Panc1 (cell line): ENCODE measurements at regions of chr14 and their contacts with region 1.

Region 1: GRCh38 chr14:61997161-61997560 is 234.9 kb downstream of the SNAPC1 start:
- DNase-seq: no peak
- ATAC-seq: no peak
- H3K4me3 ChIP-seq: no peak overlapping the region
- H3K27ac ChIP-seq: no peak overlapping the region
- H3K4me1 ChIP-seq: no peaks in the 10 kb centered on the region
- H3K27me3 ChIP-seq: no peaks in the 10 kb centered on the region
- CTCF ChIP-seq: no peak

Region 2: DNA sequence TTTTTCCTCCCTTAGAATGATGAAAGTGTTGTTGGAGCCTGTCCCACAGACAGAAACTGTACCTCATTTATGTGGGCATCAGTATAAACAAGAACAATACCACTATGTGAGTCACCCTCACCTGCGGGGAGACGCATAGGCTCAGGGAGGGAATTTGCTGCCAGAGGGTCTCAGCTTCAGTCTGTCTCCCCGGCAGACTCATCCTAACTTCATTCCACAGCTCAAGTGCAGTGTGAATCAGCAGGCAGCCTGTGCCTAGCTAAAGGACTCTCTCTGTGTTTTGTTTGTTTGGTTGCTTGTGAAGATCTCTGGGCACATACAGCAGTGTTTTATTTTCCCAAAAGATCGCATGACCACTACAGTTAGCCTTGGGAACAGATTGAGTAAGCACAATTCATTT is 576.8 kb before region 1 on chr14:
- CTCF ChIA-PET with region 1: no interaction called
- POLR2A ChIA-PET with region 1: no interaction called
- in situ Hi-C with region 1: no loop called
- intact Hi-C with region 1: no loop called
- DNase-seq: no peak
- ATAC-seq: no peak
- H3K4me3 ChIP-seq: no peak overlapping the region
- H3K27ac ChIP-seq: no peak overlapping the region
- H3K4me1 ChIP-seq: no peaks in the 10 kb centered on the region
- H3K27me3 ChIP-seq: no peaks in the 10 kb centered on the region
- CTCF ChIP-seq: no peak

Region 3: DNA sequence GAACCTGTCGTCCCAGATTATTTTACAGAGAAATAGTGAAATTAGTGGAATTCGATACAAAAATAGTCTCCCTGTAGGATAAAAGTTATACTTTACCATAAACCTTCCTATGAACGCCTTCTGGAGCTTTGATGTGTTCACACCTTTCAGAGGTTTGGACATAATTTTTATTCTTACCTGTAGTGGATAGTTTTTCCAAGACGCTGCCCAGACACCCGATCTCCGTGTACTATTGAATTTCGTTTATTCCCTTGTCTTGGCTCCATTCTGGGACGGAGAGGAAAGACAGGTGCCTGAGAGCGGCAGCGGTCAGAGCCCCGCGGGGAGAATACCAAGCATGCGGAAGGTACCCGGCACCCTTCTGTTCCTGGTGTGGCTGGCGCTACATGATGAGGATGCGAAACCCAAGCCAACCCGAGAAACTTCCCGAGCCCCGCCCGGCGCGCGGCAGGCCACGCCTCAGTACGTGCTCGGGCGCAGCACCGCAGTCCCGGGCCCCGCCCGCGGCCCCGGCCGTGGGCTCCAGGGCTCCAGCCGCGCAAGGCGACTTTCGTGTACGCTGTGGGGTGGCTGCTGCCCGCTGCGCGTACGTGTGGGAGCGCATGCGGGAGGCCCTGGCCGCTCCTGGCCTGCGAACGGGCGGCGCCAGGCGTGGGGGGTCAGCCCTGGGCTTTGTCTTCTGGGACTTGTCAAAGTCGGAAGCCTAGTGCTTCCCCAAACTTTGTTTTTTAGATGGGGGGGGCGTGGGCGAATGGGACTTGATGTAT is 246.3 kb before region 1 on chr14:
- CTCF ChIA-PET with region 1: no interaction called
- POLR2A ChIA-PET with region 1: no interaction called
- in situ Hi-C with region 1: no loop called
- intact Hi-C with region 1: no loop called
- DNase-seq: no peak
- ATAC-seq: peak; percentile 99
- H3K4me3 ChIP-seq: peak overlapping the region; percentile 52 to 69
- H3K27ac ChIP-seq: peak overlapping the region; percentile 71
- H3K4me1 ChIP-seq: peaks cover 5% of the 10 kb centered on the region
- H3K27me3 ChIP-seq: no peaks in the 10 kb centered on the region
- CTCF ChIP-seq: no peak

Region 4: GRCh38 chr14:61894452-61895077 is 102.6 kb before region 1 on chr14:
- CTCF ChIA-PET with region 1: interaction called, 11 read pairs
- POLR2A ChIA-PET with region 1: no interaction called
- in situ Hi-C with region 1: no loop called
- intact Hi-C with region 1: no loop called
- DNase-seq: peak; percentile 25
- ATAC-seq: no peak
- H3K4me3 ChIP-seq: no peak overlapping the region
- H3K27ac ChIP-seq: no peak overlapping the region
- H3K4me1 ChIP-seq: no peaks in the 10 kb centered on the region
- H3K27me3 ChIP-seq: no peaks in the 10 kb centered on the region; the same call in 1 of the 2 replicates
- CTCF ChIP-seq: peak; percentile 83

Region 5: DNA sequence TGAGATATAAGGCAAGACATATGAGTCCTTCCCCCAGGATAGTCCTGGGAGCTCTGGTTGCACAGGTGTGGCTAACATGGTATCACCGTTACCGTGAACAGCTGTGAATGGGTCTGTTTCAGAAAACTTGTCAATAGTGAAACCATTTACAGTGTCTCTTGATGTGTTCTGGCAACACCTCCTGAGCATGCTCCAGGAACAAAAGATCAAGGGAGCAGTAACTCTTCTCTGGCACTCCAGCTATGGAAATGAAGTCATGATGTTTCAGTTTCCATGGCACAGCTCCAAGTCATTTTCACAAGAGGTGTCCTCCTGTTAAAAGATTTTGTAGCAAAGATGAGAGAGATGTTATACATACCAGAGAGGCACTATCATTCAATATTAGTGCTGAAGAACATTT is 18.8 kb after region 1 on chr14:
- CTCF ChIA-PET with region 1: no interaction called
- POLR2A ChIA-PET with region 1: no interaction called
- in situ Hi-C with region 1: no loop called
- intact Hi-C with region 1: no loop called
- DNase-seq: no peak
- ATAC-seq: no peak
- H3K4me3 ChIP-seq: no peak overlapping the region
- H3K27ac ChIP-seq: no peak overlapping the region
- H3K4me1 ChIP-seq: no peaks in the 10 kb centered on the region
- H3K27me3 ChIP-seq: no peaks in the 10 kb centered on the region
- CTCF ChIP-seq: no peak